Thyroid gland (tissue), 4 donors: ENCODE measurements at regions of chr1 and their contacts with region 1.

Region 1: DNA sequence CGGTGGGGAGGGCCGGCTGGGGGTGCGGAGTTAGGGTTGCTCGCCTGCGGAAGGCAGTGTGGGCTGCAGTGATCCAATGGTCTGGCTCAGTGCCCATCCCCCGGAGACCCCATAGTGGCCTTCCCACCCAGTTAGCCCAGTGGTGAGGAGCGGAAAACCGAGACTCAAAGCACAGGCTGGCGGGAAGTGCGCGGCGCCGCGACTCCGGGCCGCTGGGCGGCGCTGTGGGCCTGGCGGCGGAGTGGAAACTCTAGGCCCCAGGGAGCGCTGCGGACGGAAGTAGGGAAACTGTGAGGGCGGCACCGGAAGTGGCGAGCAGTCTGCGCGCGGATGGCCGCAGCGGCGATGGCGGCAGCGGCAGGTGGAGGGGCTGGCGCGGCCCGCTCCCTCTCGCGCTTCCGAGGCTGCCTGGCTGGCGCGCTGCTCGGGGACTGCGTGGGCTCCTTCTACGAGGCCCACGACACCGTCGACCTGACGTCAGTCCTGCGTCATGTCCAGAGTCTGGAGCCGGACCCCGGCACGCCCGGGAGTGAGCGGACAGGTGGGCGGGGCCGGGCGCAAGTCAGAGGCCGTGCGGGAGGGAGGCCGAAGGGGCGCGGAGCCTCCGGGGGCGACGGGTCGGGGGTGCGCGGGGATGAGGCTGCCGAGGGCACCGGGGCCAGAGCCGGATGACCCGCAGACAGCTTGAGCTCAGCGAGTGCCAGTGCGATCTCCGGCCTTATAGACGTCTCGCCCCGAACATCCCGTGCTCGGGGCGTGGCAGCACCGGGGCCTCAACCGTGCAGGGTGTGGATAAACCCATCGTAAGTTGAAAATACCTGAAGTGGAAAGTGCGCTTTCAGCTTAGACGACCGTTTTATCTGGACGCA is at the start of gene ADPRS:
- DNase-seq: peak; percentile 85 to 86
- H3K4me3 ChIP-seq: peak within 1 kb of the TSS; percentile 51 to 90 (median 73)
- H3K27ac ChIP-seq: peak within 1 kb of the TSS; percentile 19 to 88 (median 84)
- H3K4me1 ChIP-seq: peaks cover 24 to 42% of the 10 kb centered on the region in 2 donors
- H3K27me3 ChIP-seq: no peaks in the 10 kb centered on the region
- CTCF ChIP-seq: peak; percentile 88 to 100 (median 99)
- POLR2A ChIP-seq: peak; percentile 79 to 91
- total RNA-seq, gene ADPRS: 31.8 to 50.1 (median 41.7) TPM

Region 2: DNA sequence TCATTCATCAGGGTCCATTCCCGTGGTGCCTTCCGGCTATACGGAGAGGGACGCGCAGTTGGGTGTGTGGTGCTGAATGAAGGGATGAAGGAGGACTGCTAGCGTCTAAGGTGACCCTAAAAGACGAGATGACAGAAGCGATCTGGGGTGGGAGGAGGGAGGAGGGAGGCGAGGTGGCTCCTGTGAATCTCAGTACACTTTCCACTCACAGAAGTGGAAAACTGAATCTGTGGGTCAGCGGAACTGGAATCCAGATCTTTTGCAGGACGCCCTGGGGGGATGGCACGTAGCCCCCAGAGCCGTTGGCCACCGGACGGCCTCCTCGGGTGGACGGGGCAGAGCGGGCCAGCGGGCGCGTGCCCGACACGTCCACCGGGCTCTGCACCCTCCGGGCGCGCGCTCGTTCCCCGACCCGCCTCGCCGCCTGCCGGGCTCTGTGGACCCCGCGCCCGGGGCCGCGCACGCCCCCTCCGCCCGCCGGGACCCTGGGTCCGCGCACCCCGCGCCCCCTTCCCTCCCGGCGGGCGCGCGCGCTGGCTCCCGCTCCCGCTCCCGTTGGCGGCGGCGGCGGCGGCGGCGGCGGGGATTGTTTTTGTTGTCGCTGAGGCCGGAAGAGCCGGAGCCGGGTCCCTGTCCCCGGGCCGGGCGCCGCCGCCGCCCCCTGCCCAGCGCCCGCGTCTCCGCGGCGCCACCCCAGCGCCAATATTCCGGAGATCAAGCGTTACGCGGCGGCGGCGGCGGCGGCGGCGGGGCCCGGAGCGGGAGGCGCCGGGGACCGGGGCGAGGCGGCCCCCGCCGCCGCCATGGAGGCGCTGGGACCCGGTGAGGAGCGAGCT is 281.0 kb before region 1 on chr1 and contains the start of gene AGO4:
- intact Hi-C with region 1: no loop called
- DNase-seq: peak; percentile 62 to 63
- H3K4me3 ChIP-seq: peak within 1 kb of the TSS; percentile 70 to 94 (median 89)
- H3K27ac ChIP-seq: peak within 1 kb of the TSS; percentile 33 to 85 (median 83)
- H3K4me1 ChIP-seq: peaks cover 14% of the 10 kb centered on the region in 2 donors
- H3K27me3 ChIP-seq: no peaks in the 10 kb centered on the region
- CTCF ChIP-seq: peak in 2 of 6 experiments; percentile 22 to 29
- POLR2A ChIP-seq: no peak
- total RNA-seq, gene AGO4: 10.2 to 25.4 (median 13.2) TPM

Region 3: DNA sequence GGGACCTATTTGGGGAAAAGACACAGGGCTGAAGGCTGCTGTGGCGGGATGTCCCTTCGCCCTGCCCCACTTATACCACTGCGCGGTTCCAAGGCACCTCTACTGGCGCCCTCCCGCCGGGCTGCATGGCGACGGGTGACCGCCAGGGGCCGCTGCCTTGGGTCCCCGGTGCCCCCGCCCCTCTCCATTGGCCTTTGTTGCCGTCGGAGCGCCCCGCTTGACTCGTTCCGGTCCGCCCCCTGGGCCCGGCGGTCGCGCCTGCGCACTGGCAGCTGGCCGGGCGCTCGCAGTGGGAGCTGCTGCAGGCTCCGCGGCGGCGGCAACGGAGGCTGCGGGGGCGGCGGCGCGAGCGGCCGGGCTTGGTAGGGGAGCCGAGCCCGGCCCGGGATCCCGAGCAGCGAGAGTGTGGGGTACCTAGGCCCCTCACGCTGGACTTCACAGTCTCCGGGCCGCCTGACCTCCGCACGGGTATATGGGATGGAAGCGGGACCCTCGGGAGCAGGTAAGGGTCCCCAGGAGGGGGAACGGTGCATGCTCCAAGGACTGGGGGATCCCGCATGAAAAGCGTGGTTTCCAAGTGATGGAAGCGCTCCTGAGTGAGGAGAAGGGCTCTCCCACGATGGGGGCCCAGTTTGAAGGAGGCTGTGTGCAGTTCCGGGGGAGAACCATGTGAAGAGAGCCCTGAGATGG is 205.7 kb before region 1 on chr1 and contains the start of gene AGO1:
- intact Hi-C with region 1: loop called (anchors 5 kb)
- DNase-seq: peak; percentile 94 to 97
- H3K4me3 ChIP-seq: peak within 1 kb of the TSS; percentile 75 to 90 (median 90)
- H3K27ac ChIP-seq: peak within 1 kb of the TSS; percentile 61 to 77 (median 69)
- H3K4me1 ChIP-seq: peaks cover 7 to 11% of the 10 kb centered on the region in 2 donors
- H3K27me3 ChIP-seq: no peaks in the 10 kb centered on the region
- CTCF ChIP-seq: peak; percentile 77 to 99 (median 98)
- POLR2A ChIP-seq: peak in 1 of 2 donors; percentile 92
- total RNA-seq, gene AGO1: 21.8 to 27.7 (median 25.4) TPM